ENCODE measurements at regions of chr10 and their contacts with region 1.

Region 1: GRCh38 chr10:64306729-64307327 is 785.6 kb downstream of the REEP3 start:
- DNase-seq: no peak
- H3K4me3 Mint-ChIP-seq: no peak overlapping the region
- H3K27ac Mint-ChIP-seq: no peak overlapping the region
- H3K4me1 Mint-ChIP-seq: no peaks in the 10 kb centered on the region
- H3K27me3 Mint-ChIP-seq: no peaks in the 10 kb centered on the region

Region 2: DNA sequence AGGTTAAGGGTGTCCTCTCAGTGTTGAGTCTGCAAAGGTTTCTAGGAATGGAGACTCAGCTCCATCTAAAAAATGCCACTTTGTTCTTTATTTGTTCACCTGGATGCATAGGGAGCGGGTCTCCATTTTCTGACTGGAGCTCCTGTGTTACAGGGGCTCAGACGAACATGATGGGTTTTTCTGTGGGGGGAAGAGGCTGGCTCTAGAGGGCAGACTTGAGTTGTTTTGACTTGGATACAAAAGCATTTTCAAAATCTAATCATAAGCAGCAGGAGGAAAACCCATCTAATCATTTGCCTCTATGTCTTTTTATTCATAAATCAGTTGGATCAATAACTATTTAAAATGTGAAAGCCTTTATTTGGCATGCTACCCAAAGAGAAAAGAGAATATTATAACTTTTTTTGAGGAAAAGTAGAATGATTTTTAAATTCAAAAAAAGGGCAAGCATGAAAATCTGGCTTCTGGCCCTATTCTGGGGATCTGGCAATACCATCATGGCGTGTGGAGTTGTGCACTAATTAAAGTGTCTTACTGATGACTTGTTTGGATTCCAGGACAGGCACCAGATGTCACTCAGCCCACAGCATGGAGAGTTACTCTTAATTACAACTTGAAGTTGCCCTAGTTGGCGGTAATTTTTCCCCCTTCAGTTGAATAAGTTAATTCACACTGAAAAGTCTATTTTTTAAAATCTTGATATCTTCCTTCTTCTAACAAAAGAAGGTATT is 190.8 kb before region 1 on chr10:
- CTCF ChIA-PET with region 1: no interaction called
- intact Hi-C with region 1: loop called (anchors 10 kb)
- DNase-seq: peak; percentile 22
- H3K4me3 Mint-ChIP-seq: no peak overlapping the region
- H3K27ac Mint-ChIP-seq: no peak overlapping the region
- H3K4me1 Mint-ChIP-seq: peaks cover 5% of the 10 kb centered on the region
- H3K27me3 Mint-ChIP-seq: peaks cover 2% of the 10 kb centered on the region